ENCODE measurements at regions of chr13 and their contacts with region 1.

Region 1: GRCh38 chr13:66965181-66965580 is 265.0 kb downstream of the PCDH9 start:
- DNase-seq: no peak
- H3K4me3 ChIP-seq: no peak overlapping the region
- H3K27ac ChIP-seq: no peak overlapping the region
- H3K4me1 ChIP-seq: peaks cover 8% of the 10 kb centered on the region
- CTCF ChIP-seq: no peak

Region 2: DNA sequence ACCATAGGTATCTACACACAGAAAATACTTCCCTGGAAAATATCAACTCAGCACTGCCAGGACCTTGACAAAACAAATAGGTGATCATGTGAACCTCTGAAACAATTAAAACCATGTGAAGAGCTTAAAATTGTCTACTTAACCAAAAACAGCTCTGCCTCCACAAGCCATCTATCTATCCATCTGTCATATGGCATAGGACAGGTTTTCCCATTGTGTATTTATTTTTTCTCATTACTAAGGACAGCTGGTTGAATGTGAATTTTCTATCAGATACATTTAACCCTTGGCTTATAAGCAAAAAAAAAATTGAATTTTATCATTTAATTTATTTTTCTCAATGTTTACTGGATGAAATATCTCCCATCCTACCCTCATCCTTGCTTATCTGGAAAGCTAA is 14.5 kb before region 1 on chr13:
- CTCF ChIA-PET with region 1: no interaction called
- POLR2A ChIA-PET with region 1: interaction called, 30 read pairs
- intact Hi-C with region 1: no loop called
- DNase-seq: no peak
- H3K4me3 ChIP-seq: no peak overlapping the region
- H3K27ac ChIP-seq: no peak overlapping the region
- H3K4me1 ChIP-seq: no peaks in the 10 kb centered on the region
- CTCF ChIP-seq: no peak

Region 3: DNA sequence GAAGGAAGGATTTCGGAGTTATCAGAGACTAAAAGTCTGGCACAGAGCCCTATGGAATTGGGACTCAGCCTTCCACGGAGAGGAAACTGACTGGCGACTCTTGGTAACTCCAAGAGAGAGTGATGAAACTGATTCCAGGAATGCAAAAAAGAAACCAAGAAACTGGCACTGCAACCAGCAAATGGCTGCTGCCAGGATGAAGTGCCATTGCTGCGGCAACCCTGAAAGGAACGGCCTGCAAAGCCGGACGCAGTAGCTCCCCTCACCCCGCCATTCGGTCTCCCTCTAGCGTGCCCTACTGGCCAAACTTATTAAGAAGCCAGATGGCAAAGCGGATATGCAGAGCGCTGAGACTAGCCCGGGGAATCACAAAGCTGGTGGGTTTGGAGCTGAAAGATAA is 28.9 kb after region 1 on chr13:
- CTCF ChIA-PET with region 1: no interaction called
- POLR2A ChIA-PET with region 1: interaction called, 21 read pairs
- intact Hi-C with region 1: no loop called
- DNase-seq: peak; percentile 90
- H3K4me3 ChIP-seq: peak overlapping the region; percentile 49
- H3K27ac ChIP-seq: peak overlapping the region; percentile 99
- H3K4me1 ChIP-seq: peaks cover 70% of the 10 kb centered on the region
- CTCF ChIP-seq: peak; percentile 81